ENCODE measurements at regions of chr5 and their contacts with region 1.

Region 1: GRCh38 chr5:172958331-172959046 is 735 bp upstream of the RPL26L1 start:
- DNase-seq: peak; percentile 23 to 79 (median 63)
- ATAC-seq: peak; percentile 65
- H3K4me3 ChIP-seq: peak overlapping the region; percentile 76 to 77
- H3K4me3 Mint-ChIP-seq: peak overlapping the region; percentile 97
- H3K27ac ChIP-seq: peak overlapping the region; percentile 65 to 87
- H3K27ac Mint-ChIP-seq: peak overlapping the region; percentile 98
- H3K4me1 ChIP-seq: peaks cover 13% of the 10 kb centered on the region
- H3K4me1 Mint-ChIP-seq: peaks cover 38% of the 10 kb centered on the region
- H3K27me3 ChIP-seq: no peaks in the 10 kb centered on the region
- H3K27me3 Mint-ChIP-seq: no peaks in the 10 kb centered on the region
- CTCF ChIP-seq: no peak

Region 2: GRCh38 chr5:172283020-172283861 is 675.2 kb before region 1 on chr5 and contains the start of gene UBTD2:
- CTCF ChIA-PET with region 1: no interaction called
- POLR2A ChIA-PET with region 1: no interaction called
- intact Hi-C with region 1: loop called in 1 of 2 experiments (anchors 10 kb)
- DNase-seq: peak; percentile 44 to 85 (median 70)
- ATAC-seq: peak; percentile 76
- H3K4me3 ChIP-seq: peak within 1 kb of the TSS; percentile 76 to 78
- H3K4me3 Mint-ChIP-seq: peak within 1 kb of the TSS; percentile 88
- H3K27ac ChIP-seq: no peak within 1 kb of the TSS
- H3K27ac Mint-ChIP-seq: peak within 1 kb of the TSS; percentile 77
- H3K4me1 ChIP-seq: peaks cover 18% of the 10 kb centered on the region
- H3K4me1 Mint-ChIP-seq: peaks cover 26% of the 10 kb centered on the region
- H3K27me3 ChIP-seq: no peaks in the 10 kb centered on the region
- H3K27me3 Mint-ChIP-seq: no peaks in the 10 kb centered on the region
- CTCF ChIP-seq: peak; percentile 61
- total RNA-seq, gene UBTD2: 0.78 to 0.79 TPM

Region 3: GRCh38 chr5:172764849-172765765 is 193.4 kb before region 1 on chr5:
- CTCF ChIA-PET with region 1: interaction called, 3 read pairs
- POLR2A ChIA-PET with region 1: no interaction called
- intact Hi-C with region 1: loop called in 1 of 2 experiments (anchors 1 kb)
- DNase-seq: peak; percentile 88 to 100 (median 96)
- ATAC-seq: peak; percentile 77
- H3K4me3 ChIP-seq: peak overlapping the region; percentile 41 to 48
- H3K4me3 Mint-ChIP-seq: peak overlapping the region; percentile 81
- H3K27ac ChIP-seq: peak overlapping the region; percentile 86 to 89
- H3K27ac Mint-ChIP-seq: peak overlapping the region; percentile 96
- H3K4me1 ChIP-seq: peaks cover 33% of the 10 kb centered on the region
- H3K4me1 Mint-ChIP-seq: peaks cover 52% of the 10 kb centered on the region
- H3K27me3 ChIP-seq: no peaks in the 10 kb centered on the region
- H3K27me3 Mint-ChIP-seq: no peaks in the 10 kb centered on the region
- CTCF ChIP-seq: no peak

Region 4: DNA sequence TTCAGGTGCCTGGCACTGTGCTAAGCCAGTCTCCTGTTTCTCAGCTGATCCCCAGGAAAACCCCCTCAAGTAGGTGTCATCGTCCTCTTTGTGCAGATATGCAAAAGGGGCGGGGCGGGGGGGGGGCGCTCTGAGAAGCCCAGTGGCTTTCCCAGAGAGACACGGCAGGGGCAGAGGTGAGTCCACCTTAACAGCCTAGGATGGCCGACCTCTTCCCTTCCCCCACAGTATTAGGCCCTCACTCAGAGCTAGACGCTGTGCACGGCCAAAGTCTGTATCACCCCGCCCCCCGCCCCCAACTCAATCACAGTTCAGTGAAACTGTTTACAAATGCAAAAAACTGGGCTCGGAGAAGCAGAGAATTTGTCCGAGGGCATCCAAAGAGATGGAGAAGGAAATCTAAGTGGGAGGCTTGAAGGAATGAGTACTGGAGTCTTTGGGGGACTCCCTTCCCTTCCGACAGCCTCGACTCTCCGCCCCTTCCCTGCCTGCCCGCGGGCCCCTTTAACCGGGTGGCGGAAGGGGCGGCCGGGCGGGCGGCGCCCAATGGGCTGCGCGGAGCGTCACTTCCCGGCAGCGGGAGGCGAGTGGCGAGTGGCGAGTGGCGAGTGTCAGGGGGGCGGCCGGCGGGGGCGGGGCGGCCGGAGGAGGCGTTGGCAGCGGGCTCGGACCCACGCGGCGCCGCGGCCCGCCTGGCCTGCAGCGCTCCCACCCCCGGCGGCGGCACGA is 124.6 kb before region 1 on chr5 and contains the start of gene ERGIC1:
- CTCF ChIA-PET with region 1: no interaction called
- POLR2A ChIA-PET with region 1: interaction called, 3 read pairs
- intact Hi-C with region 1: loop called in 1 of 2 experiments (anchors 2 kb)
- DNase-seq: peak in 8 of 9 experiments; percentile 58 to 84 (median 72)
- ATAC-seq: peak; percentile 74
- H3K4me3 ChIP-seq: peak within 1 kb of the TSS; percentile 67 to 81
- H3K4me3 Mint-ChIP-seq: peak within 1 kb of the TSS; percentile 86
- H3K27ac ChIP-seq: peak within 1 kb of the TSS; percentile 67 to 88
- H3K27ac Mint-ChIP-seq: peak within 1 kb of the TSS; percentile 92
- H3K4me1 ChIP-seq: peaks cover 44% of the 10 kb centered on the region
- H3K4me1 Mint-ChIP-seq: peaks cover 44% of the 10 kb centered on the region
- H3K27me3 ChIP-seq: no peaks in the 10 kb centered on the region
- H3K27me3 Mint-ChIP-seq: no peaks in the 10 kb centered on the region
- CTCF ChIP-seq: no peak
- total RNA-seq, gene ERGIC1: 61.0 to 61.2 TPM

Region 5: GRCh38 chr5:173144200-173145176 is 186.0 kb after region 1 on chr5 and contains the start of gene BNIP1:
- CTCF ChIA-PET with region 1: interaction called, 4 read pairs
- POLR2A ChIA-PET with region 1: interaction called, 6 read pairs
- intact Hi-C with region 1: loop called (anchors 1 kb)
- DNase-seq: peak; percentile 91 to 98 (median 97)
- ATAC-seq: peak; percentile 94
- H3K4me3 ChIP-seq: peak within 1 kb of the TSS; percentile 74 to 99
- H3K4me3 Mint-ChIP-seq: peak within 1 kb of the TSS; percentile 99
- H3K27ac ChIP-seq: peak within 1 kb of the TSS; percentile 95 to 98
- H3K27ac Mint-ChIP-seq: peak within 1 kb of the TSS; percentile 99
- H3K4me1 ChIP-seq: peaks cover 10% of the 10 kb centered on the region
- H3K4me1 Mint-ChIP-seq: peaks cover 11% of the 10 kb centered on the region
- H3K27me3 ChIP-seq: no peaks in the 10 kb centered on the region
- H3K27me3 Mint-ChIP-seq: no peaks in the 10 kb centered on the region
- CTCF ChIP-seq: peak; percentile 68
- total RNA-seq, gene BNIP1: 22.7 to 24.0 TPM

Region 6: DNA sequence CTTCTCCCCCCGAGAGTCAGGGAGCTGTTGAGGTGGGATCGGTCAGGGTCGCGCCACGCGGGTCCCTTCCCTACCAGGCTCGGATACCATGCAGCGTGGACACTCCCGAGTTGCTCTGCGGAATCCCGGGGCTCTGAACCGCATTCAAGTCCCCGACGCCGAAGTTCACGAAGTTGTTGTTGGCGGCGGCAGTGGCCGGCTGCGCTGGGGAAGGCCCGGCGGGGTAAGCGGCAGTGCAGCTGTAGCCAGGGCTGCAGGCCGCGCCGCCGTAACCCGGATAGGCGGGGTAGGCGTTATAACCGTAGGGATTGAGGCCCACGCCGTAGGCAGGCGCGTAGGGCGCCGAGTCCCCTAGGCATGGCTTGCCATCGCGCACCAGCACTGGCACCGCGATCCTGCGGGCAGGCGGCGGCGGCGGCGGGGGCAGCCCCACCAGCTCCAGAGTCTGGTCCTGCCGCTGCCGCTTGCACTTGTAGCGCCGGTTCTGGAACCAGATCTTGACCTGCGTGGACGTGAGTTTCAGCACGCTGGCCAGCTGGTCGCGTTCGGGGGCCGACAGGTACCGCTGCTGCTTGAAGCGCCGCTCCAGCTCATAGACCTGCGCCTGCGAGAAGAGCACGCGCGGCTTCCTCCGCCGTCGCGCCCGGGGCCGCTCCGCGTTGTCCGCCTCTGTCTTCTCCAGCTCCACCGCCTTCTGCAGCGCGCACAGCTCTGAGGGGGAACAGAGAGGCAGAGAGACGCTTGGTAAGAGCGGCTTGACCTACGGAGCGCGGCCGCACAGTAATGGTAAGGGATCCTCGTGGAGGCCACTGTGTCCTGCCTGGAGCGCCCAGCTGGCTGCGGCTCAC is 274.2 kb after region 1 on chr5:
- CTCF ChIA-PET with region 1: no interaction called
- POLR2A ChIA-PET with region 1: no interaction called
- intact Hi-C with region 1: no loop called
- DNase-seq: no peak
- ATAC-seq: no peak
- H3K4me3 ChIP-seq: no peak overlapping the region
- H3K4me3 Mint-ChIP-seq: no peak overlapping the region
- H3K27ac ChIP-seq: no peak overlapping the region
- H3K27ac Mint-ChIP-seq: no peak overlapping the region
- H3K4me1 ChIP-seq: peaks cover 41% of the 10 kb centered on the region
- H3K4me1 Mint-ChIP-seq: peaks cover 51% of the 10 kb centered on the region
- H3K27me3 ChIP-seq: peaks cover 18 to 46% of the 10 kb centered on the region in 2 experiments
- H3K27me3 Mint-ChIP-seq: peaks cover 73% of the 10 kb centered on the region
- CTCF ChIP-seq: no peak

Region 7: GRCh38 chr5:173887610-173888472 is 929.4 kb after region 1 on chr5 and contains the start of gene CPEB4:
- CTCF ChIA-PET with region 1: no interaction called
- POLR2A ChIA-PET with region 1: no interaction called
- intact Hi-C with region 1: loop called in 1 of 2 experiments (anchors 10 kb)
- DNase-seq: peak; percentile 92 to 100 (median 96)
- ATAC-seq: peak; percentile 95
- H3K4me3 ChIP-seq: peak within 1 kb of the TSS; percentile 68 to 76
- H3K4me3 Mint-ChIP-seq: peak within 1 kb of the TSS; percentile 100
- H3K27ac ChIP-seq: peak within 1 kb of the TSS; percentile 42 to 97
- H3K27ac Mint-ChIP-seq: peak within 1 kb of the TSS; percentile 99
- H3K4me1 ChIP-seq: peaks cover 48% of the 10 kb centered on the region
- H3K4me1 Mint-ChIP-seq: peaks cover 78% of the 10 kb centered on the region
- H3K27me3 ChIP-seq: no peaks in the 10 kb centered on the region
- H3K27me3 Mint-ChIP-seq: no peaks in the 10 kb centered on the region
- CTCF ChIP-seq: no peak
- total RNA-seq, gene CPEB4: 21.7 to 24.3 TPM

Measured in CD8-positive, alpha-beta T cell (primary cell).